PC-9 (cell line): ENCODE measurements at regions of chr4 and their contacts with region 1.

Region 1: GRCh38 chr4:76624241-76624681 is 189.2 kb downstream of the SHROOM3 start:
- DNase-seq: peak in 1 of 2 experiments; percentile 48
- H3K4me3 ChIP-seq: no peak overlapping the region
- H3K27ac ChIP-seq: no peak overlapping the region
- H3K4me1 ChIP-seq: peaks cover 45% of the 10 kb centered on the region
- H3K27me3 ChIP-seq: no peaks in the 10 kb centered on the region
- CTCF ChIP-seq: no peak

Region 2: DNA sequence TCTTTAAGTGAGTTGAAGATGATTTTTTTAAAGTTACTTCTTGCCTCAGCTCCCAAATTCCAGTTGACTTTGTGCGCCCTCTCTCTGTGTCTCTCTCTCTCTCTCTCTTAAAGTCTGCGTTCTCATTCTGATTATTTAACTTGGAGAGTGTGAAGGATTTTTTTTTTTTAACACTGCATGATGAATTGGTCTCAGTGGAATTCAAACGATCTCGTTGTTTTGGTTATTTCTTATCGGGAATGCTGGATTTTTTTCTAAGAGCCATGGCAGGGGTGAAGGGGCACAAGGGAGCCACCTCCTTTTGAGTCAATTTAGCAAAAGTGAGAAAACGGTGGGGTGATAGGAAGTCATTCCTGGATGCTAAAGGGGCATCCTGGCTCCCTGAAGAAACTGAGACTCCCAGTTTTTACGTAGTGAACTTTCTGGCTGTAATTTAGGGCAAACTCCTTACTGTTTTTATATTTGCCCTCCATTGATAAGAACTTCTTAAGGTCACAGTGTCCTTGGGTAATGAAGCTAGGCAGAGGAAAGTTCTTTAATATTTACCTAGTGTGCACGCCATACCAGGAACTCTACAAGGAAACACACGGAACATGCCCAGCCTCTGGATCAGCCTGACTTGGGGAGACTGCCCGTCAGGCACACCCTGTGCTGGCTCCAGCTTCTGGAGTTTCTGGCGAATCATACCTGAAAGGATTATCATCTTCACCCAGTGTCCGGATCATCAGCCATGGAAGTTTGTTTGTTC is 12.9 kb before region 1 on chr4:
- CTCF ChIA-PET with region 1: interaction called, 3 read pairs
- POLR2A ChIA-PET with region 1: interaction called, 36 read pairs
- intact Hi-C with region 1: no loop called
- DNase-seq: no peak
- H3K4me3 ChIP-seq: no peak overlapping the region
- H3K27ac ChIP-seq: no peak overlapping the region
- H3K4me1 ChIP-seq: no peaks in the 10 kb centered on the region
- H3K27me3 ChIP-seq: no peaks in the 10 kb centered on the region
- CTCF ChIP-seq: no peak

Region 3: GRCh38 chr4:76665139-76665538 is 40.9 kb after region 1 on chr4:
- CTCF ChIA-PET with region 1: no interaction called
- POLR2A ChIA-PET with region 1: no interaction called
- intact Hi-C with region 1: loop called (anchors 5 kb)
- DNase-seq: peak; percentile 81 to 92
- H3K4me3 ChIP-seq: no peak overlapping the region
- H3K27ac ChIP-seq: peak overlapping the region; percentile 80
- H3K4me1 ChIP-seq: peaks cover 29% of the 10 kb centered on the region
- H3K27me3 ChIP-seq: no peaks in the 10 kb centered on the region
- CTCF ChIP-seq: no peak